Naive thymus-derived CD4-positive, alpha-beta T cell (primary cell): ENCODE measurements at regions of chr9 and their contacts with region 1.

Region 1: DNA sequence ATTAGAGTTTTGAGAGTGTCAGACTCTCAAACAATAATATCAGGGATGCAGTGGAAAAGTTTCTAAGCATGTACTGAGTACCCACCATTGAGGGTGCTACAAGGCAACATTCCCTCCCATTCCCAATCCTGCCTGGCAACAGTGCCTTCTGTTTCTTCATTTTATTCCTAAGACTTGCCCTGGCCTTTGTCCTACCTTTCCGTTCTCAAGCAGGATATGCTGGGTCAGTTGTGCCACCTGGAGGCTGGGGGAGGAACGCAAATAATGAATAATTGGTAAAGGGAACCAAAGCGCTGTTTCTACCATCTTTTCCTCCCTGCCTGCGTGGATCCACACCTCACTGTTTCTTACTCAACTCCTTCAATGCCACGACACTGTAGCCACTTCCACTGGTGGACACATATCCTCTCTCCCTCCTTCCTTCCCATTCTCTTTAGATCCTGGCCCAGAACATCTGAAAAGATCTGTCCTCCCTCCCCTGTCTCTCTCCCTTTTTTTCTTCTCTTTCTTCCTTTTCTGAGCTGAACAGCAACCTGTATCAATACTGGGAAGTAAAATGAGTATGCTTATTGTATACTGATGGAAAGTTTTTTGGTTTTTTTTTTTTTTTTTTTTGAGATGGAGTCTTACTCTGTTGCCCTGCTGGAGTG is 149.5 kb downstream of the C9orf152 start:
- DNase-seq: peak; percentile 16 to 63 (median 47)
- ATAC-seq: peak; percentile 68
- H3K4me3 ChIP-seq: no peak overlapping the region
- H3K4me3 Mint-ChIP-seq: peak overlapping the region in 2 of 10 donors; percentile 9 to 18
- H3K27ac ChIP-seq: no peak overlapping the region
- H3K27ac Mint-ChIP-seq: peak overlapping the region in 1 of 9 donors; percentile 66
- H3K4me1 ChIP-seq: no peaks in the 10 kb centered on the region
- H3K4me1 Mint-ChIP-seq: peaks cover 0 to 54% (median 8%) of the 10 kb centered on the region in 7 donors
- H3K27me3 ChIP-seq: no peaks in the 10 kb centered on the region
- H3K27me3 Mint-ChIP-seq: peaks cover 0 to 4% (median 0%) of the 10 kb centered on the region in 5 donors

Region 2: GRCh38 chr9:109817846-109818472 is 240.5 kb before region 1 on chr9:
- CTCF ChIA-PET with region 1: no interaction called
- POLR2A ChIA-PET with region 1: no interaction called
- intact Hi-C with region 1: loop called in 1 of 2 experiments (anchors 5 kb)
- DNase-seq: peak in 4 of 9 donors; percentile 1 to 31 (median 10)
- ATAC-seq: no peak
- H3K4me3 ChIP-seq: no peak overlapping the region
- H3K4me3 Mint-ChIP-seq: no peak overlapping the region
- H3K27ac ChIP-seq: no peak overlapping the region
- H3K27ac Mint-ChIP-seq: no peak overlapping the region
- H3K4me1 ChIP-seq: no peaks in the 10 kb centered on the region
- H3K4me1 Mint-ChIP-seq: peaks cover 0 to under 1% (median 0%) of the 10 kb centered on the region in 7 donors
- H3K27me3 ChIP-seq: no peaks in the 10 kb centered on the region
- H3K27me3 Mint-ChIP-seq: peaks cover 5 to 16% (median 7%) of the 10 kb centered on the region in 5 donors

Region 3: DNA sequence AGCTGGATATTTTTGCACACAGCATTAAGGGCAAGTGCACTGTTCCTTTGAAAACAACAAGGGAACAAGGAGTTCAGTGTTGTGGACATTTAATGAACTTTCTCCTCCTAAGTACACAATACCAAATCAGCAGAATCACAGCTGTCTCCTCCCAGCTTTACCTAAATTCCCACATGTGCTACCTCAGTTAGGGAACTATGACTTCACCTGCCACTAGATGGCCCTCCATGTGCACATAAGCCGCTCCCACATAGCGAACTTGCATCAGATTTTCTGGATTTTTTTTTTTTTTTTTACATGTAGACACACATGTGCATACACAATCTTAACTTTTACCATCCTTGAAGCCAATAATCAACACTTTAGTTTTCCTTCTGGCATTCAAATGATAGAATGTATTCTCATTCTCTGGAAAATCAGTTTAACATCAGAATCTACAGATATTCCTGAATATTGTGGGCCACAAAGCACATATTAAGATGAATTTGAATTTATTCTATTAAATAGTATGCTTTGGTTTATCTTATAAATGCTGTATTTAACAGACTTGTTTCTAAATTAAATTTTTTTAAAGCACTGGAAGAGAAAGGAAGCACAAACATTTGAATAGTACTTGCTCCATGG is 154.8 kb before region 1 on chr9:
- CTCF ChIA-PET with region 1: interaction called, 111 read pairs
- POLR2A ChIA-PET with region 1: interaction called, 3 read pairs
- intact Hi-C with region 1: loop called (anchors 1 kb)
- DNase-seq: peak; percentile 11 to 73 (median 53)
- ATAC-seq: peak; percentile 84
- H3K4me3 ChIP-seq: no peak overlapping the region
- H3K4me3 Mint-ChIP-seq: no peak overlapping the region
- H3K27ac ChIP-seq: no peak overlapping the region
- H3K27ac Mint-ChIP-seq: no peak overlapping the region
- H3K4me1 ChIP-seq: no peaks in the 10 kb centered on the region
- H3K4me1 Mint-ChIP-seq: peaks cover 0 to 37% (median 5%) of the 10 kb centered on the region in 7 donors
- H3K27me3 ChIP-seq: no peaks in the 10 kb centered on the region
- H3K27me3 Mint-ChIP-seq: no peaks in the 10 kb centered on the region